ENCODE measurements at regions of chrX and their contacts with region 1.

Region 1: DNA sequence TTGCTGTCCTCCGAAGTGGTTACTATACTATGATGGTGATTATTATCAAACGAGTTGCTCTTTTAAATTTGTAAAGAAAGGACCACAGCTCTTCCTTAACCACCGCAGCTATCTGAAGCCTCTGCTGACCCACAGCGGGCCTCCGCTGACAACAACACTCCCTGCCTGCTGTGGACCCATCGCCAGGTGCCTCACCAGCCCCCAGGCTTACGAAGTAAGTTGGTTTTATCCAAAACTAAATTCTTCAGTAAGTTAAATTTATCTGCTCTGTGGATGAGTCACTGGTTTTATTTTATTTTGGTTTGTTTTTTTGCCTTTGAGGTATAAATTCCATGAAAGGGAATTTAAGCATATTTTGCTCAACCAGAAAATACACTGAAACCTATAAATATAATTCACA is 54.7 kb downstream of the SLC9A6 start:
- DNase-seq: no peak
- H3K4me3 ChIP-seq: no peak overlapping the region
- H3K27ac ChIP-seq: no peak overlapping the region
- H3K4me1 ChIP-seq: no peaks in the 10 kb centered on the region
- H3K27me3 ChIP-seq: no peaks in the 10 kb centered on the region
- CTCF ChIP-seq: no peak

Region 2: DNA sequence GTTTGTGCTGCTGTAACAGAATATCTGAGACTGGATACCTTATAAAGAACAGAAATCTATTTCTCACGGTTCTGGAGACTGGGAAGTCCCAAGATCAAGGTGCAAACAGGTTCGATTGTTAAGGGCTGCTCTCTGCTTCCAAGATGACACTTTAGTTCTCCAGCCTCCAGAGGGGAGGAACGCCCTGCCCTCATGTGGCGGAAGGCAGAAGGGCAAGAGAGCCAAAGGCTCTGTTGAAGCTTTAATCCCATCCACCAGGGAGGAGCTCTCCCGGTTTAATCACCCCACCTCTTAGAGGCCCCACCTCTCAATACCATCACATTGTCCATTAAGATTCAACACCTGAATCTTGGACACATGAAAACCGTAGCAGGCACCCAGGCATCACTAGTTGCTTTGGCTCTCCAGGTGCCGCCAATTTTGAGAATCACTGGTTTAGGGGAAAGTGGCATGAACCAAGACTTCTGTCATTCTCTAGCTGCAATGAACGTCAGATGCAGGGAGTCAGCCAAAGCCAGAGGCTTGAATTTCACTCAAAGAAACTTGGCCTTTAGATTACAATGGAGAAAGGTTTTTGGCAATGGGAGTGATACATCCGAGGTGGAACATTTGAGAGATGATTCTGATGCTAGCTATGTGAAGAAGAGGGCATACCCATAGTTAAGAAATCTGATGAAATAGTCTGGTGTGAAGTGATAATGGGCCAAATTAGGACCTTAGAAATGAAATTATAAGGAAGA is 123.0 kb after region 1 on chrX:
- CTCF ChIA-PET with region 1: no interaction called
- dilution Hi-C with region 1: no loop called
- in situ Hi-C with region 1: loop called in 1 of 2 experiments (anchors 10 kb)
- intact Hi-C with region 1: loop called (anchors 5 kb)
- DNase-seq: peak; percentile 45
- H3K4me3 ChIP-seq: no peak overlapping the region
- H3K27ac ChIP-seq: no peak overlapping the region
- H3K4me1 ChIP-seq: no peaks in the 10 kb centered on the region
- H3K27me3 ChIP-seq: peaks cover 3% of the 10 kb centered on the region
- CTCF ChIP-seq: peak; percentile 66 to 86

Region 3: GRCh38 chrX:136386826-136387225 is 346.9 kb after region 1 on chrX:
- CTCF ChIA-PET with region 1: no interaction called
- dilution Hi-C with region 1: no loop called
- in situ Hi-C with region 1: no loop called
- intact Hi-C with region 1: no loop called
- DNase-seq: no peak
- H3K4me3 ChIP-seq: no peak overlapping the region
- H3K27ac ChIP-seq: no peak overlapping the region
- H3K4me1 ChIP-seq: peaks cover 8% of the 10 kb centered on the region
- H3K27me3 ChIP-seq: no peaks in the 10 kb centered on the region
- CTCF ChIP-seq: no peak

Measured in mammary epithelial cell (primary cell).